CD4-positive, alpha-beta memory T cell (primary cell): ENCODE measurements at regions of chr11 and their contacts with region 1.

Region 1: DNA sequence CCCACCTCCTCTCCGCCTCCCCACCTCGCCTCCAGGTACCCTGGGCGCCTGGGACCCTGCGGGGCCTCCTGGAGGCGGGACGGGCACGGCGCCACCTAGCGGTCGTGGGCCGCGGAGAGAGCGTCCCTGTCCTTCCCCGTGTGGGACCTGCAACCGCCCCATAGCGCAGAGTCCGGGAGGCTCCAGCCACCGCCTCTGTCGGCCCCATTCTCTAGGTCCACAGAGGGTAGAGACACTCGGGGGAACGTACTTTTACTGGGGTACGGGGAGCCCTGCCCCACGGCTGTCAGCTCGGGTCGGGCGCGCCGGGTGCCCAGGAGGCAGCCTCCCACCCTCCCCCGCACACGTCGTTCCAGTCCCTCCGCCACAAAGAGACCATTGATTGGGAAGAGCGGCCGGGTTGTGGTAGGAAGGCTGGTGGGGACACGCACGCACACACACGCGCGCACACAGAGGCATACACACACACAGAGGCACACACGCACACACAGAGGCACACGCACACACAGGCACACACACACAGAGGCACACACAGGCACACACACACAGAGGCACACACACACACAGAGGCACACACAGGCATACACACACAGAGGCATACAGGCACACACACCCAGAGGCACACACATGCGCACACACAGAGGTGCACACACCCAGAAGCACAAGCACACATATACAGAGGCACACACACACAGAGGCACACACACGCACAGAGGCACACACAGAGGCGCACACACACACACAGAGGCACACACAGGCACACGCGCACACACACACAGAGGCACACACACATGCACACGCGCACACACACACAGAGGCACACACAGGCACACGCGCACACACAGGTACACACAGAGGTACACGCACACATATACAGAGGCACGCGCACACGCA is 12.6 kb upstream of the NECTIN1 start:
- DNase-seq: peak in 4 of 5 donors; percentile 37 to 49 (median 44)
- H3K4me3 ChIP-seq: no peak overlapping the region
- H3K4me3 Mint-ChIP-seq: peak overlapping the region in 7 of 8 donors; percentile 15 to 78 (median 44)
- H3K27ac ChIP-seq: no peak overlapping the region
- H3K27ac Mint-ChIP-seq: no peak overlapping the region
- H3K4me1 ChIP-seq: peaks cover 7% of the 10 kb centered on the region
- H3K4me1 Mint-ChIP-seq: peaks cover 8 to 22% (median 10%) of the 10 kb centered on the region in 4 donors
- H3K27me3 ChIP-seq: peaks cover 17% of the 10 kb centered on the region
- H3K27me3 Mint-ChIP-seq: peaks cover 27 to 34% of the 10 kb centered on the region in 2 donors

Region 2: GRCh38 chr11:119381181-119381988 is 360.2 kb before region 1 on chr11 and contains the start of gene USP2:
- CTCF ChIA-PET with region 1: no interaction called
- POLR2A ChIA-PET with region 1: no interaction called
- intact Hi-C with region 1: no loop called
- DNase-seq: peak; percentile 96 to 98 (median 97)
- H3K4me3 ChIP-seq: peak within 1 kb of the TSS; percentile 77 to 86
- H3K4me3 Mint-ChIP-seq: no peak within 1 kb of the TSS
- H3K27ac ChIP-seq: peak within 1 kb of the TSS; percentile 49
- H3K27ac Mint-ChIP-seq: peak within 1 kb of the TSS in 3 of 7 donors; percentile 75 to 87 (median 87)
- H3K4me1 ChIP-seq: peaks cover 17% of the 10 kb centered on the region
- H3K4me1 Mint-ChIP-seq: peaks cover 0 to 9% (median 6%) of the 10 kb centered on the region in 4 donors
- H3K27me3 ChIP-seq: no peaks in the 10 kb centered on the region
- H3K27me3 Mint-ChIP-seq: peaks cover 0 to 3% of the 10 kb centered on the region in 2 donors
- total RNA-seq, gene USP2: 0.17 to 0.22 TPM

Region 3: GRCh38 chr11:119481021-119481666 is 260.5 kb before region 1 on chr11:
- CTCF ChIA-PET with region 1: no interaction called
- POLR2A ChIA-PET with region 1: no interaction called
- intact Hi-C with region 1: loop called (anchors 1 kb)
- DNase-seq: peak in 4 of 5 donors; percentile 38 to 52 (median 48)
- H3K4me3 ChIP-seq: no peak overlapping the region
- H3K4me3 Mint-ChIP-seq: no peak overlapping the region
- H3K27ac ChIP-seq: no peak overlapping the region
- H3K27ac Mint-ChIP-seq: no peak overlapping the region
- H3K4me1 ChIP-seq: peaks cover 7% of the 10 kb centered on the region
- H3K4me1 Mint-ChIP-seq: peaks cover 0 to 4% (median 0%) of the 10 kb centered on the region in 4 donors
- H3K27me3 ChIP-seq: no peaks in the 10 kb centered on the region
- H3K27me3 Mint-ChIP-seq: peaks cover 8 to 31% of the 10 kb centered on the region in 2 donors

Region 4: GRCh38 chr11:119641983-119642745 is 99.5 kb before region 1 on chr11:
- CTCF ChIA-PET with region 1: no interaction called
- POLR2A ChIA-PET with region 1: no interaction called
- intact Hi-C with region 1: loop called (anchors 1 kb)
- DNase-seq: no peak
- H3K4me3 ChIP-seq: no peak overlapping the region
- H3K4me3 Mint-ChIP-seq: no peak overlapping the region
- H3K27ac ChIP-seq: no peak overlapping the region
- H3K27ac Mint-ChIP-seq: no peak overlapping the region
- H3K4me1 ChIP-seq: no peaks in the 10 kb centered on the region
- H3K4me1 Mint-ChIP-seq: no peaks in the 10 kb centered on the region
- H3K27me3 ChIP-seq: no peaks in the 10 kb centered on the region
- H3K27me3 Mint-ChIP-seq: peaks cover 2 to 4% of the 10 kb centered on the region in 2 donors

Region 5: GRCh38 chr11:119666463-119667131 is 75.0 kb before region 1 on chr11:
- CTCF ChIA-PET with region 1: interaction called, 3 read pairs
- POLR2A ChIA-PET with region 1: no interaction called
- intact Hi-C with region 1: loop called (anchors 1 kb)
- DNase-seq: peak in 4 of 5 donors; percentile 40 to 52 (median 43)
- H3K4me3 ChIP-seq: no peak overlapping the region
- H3K4me3 Mint-ChIP-seq: no peak overlapping the region
- H3K27ac ChIP-seq: no peak overlapping the region
- H3K27ac Mint-ChIP-seq: no peak overlapping the region
- H3K4me1 ChIP-seq: no peaks in the 10 kb centered on the region
- H3K4me1 Mint-ChIP-seq: no peaks in the 10 kb centered on the region
- H3K27me3 ChIP-seq: no peaks in the 10 kb centered on the region
- H3K27me3 Mint-ChIP-seq: no peaks in the 10 kb centered on the region